ENCODE measurements at regions of chr2 and their contacts with region 1.

Region 1: GRCh38 chr2:28751252-28751955 is at the start of gene PPP1CB:
- DNase-seq: peak; percentile 98
- total RNA-seq, gene PPP1CB: 491 TPM

Region 2: GRCh38 chr2:28175028-28175427 is 576.4 kb before region 1 on chr2:
- intact Hi-C with region 1: no loop called
- DNase-seq: no peak

Region 3: GRCh38 chr2:28594289-28595108 is 156.9 kb before region 1 on chr2:
- intact Hi-C with region 1: loop called (anchors 1 kb)
- DNase-seq: peak; percentile 93

Region 4: GRCh38 chr2:28681158-28681571 is 70.2 kb before region 1 on chr2:
- intact Hi-C with region 1: loop called (anchors 5 kb)
- DNase-seq: no peak

Region 5: DNA sequence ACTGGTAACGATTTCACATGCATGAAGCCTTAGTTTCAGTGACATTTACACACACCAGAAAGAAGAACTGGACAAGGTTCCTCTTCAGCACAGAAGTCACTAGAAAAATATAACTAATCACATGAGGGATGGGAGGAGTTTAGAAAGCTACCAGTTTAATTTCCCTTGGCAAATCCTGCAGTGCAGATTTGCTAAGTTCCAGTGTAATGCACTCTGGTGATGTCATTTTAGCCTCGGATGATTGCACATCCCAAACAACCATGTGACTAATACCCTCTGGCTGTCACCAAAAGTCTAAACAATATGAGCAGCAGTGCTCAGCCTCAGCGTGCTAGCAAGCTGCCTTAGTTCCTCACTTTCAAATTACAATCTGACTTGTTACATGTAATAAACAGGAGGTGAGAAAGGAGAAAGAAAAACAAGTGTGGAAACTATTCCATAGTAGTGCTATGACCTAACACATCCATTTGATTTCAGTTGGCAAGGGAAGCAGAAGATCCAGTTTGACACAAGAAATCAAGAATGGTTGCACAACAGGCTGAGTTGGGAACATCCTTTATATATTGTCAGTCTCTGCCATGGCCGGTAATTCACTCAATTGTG is 35.0 kb before region 1 on chr2:
- intact Hi-C with region 1: loop called (anchors 5 kb)
- DNase-seq: no peak

Measured in cardiac septum (tissue), 1 donor.